AG04449 (cell line): ENCODE measurements at regions of chr20 and their contacts with region 1.

Region 1: GRCh38 chr20:47272893-47273590 is 83.5 kb downstream of the ZMYND8 start:
- DNase-seq: no peak
- H3K4me3 ChIP-seq: no peak overlapping the region
- CTCF ChIP-seq: peak; percentile 78

Region 2: DNA sequence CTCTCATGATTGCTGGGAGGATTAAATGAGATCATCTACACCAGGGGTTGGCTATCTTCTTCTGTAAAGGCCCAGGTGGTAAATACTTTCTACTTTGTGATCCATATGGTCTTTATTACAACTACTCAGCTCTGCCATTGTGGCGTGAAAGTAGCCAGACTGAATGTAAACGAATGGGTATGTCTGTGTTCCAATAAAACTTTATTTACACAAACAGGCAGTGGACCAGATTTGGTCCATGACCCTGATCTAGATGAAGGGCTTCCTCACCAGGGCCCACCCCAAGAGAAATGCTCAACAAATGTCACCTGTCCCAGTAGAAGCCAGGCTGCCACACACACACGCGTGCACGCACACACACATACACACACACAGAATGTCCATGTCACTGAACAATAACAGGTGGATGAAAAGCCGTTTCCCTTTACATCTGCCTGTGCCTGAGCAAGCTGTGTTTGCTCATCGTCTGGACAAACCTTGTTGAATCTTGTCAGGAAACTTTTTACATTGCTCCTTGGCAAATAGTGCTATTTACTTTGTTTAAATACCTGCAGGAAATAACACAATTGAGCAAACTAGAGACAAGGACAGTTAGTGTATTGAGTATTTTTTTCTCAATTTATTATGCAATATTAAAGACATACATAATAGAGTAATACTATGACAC is 264.1 kb before region 1 on chr20:
- CTCF ChIA-PET with region 1: no interaction called
- POLR2A ChIA-PET with region 1: no interaction called
- DNase-seq: no peak
- H3K4me3 ChIP-seq: no peak overlapping the region
- CTCF ChIP-seq: no peak

Region 3: DNA sequence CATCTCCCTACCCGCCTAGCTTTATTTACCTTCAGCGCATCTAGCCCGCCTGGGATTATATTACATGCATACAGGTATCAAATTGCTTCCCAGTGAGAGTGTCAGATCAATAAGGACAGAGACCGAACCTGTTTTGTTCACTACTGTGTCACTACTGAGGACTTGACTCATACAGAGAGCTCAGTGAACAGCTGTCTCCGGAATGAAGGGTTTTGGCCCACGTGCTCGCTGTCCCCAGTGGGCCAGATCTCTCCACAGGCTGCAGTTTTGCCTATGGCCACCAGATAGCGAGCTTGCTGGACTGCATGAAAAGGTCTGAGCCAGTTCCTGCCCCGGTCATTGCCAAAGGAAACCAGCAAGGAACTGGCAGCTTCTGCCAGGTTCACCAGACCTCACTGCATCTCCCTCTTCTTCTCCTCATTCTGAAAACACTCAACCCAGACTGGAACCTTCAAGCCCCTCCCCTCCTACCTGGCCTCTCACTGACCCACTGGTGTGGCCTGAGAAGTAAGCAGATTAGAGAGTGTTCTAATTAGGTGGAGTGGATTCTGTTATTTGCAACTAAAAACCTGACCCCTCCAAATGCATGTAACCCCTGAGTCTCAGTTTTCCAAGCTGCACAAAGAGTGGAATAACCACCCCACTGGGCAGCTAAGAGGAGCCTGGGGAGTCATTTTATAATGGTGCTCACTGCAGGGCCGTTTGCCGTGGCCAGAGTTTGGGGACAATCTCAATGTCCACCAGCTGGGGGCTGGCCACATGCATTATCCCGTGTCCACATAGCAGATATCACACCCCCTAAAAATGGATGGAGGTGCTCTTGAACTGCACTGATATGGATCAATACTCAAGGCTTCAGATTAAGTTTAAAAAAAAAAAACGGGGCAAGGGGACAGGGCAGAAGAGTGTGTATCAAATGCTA is 67.2 kb before region 1 on chr20:
- CTCF ChIA-PET with region 1: interaction called, 30 read pairs
- POLR2A ChIA-PET with region 1: no interaction called
- DNase-seq: no peak
- H3K4me3 ChIP-seq: no peak overlapping the region
- CTCF ChIP-seq: peak; percentile 74

Region 4: DNA sequence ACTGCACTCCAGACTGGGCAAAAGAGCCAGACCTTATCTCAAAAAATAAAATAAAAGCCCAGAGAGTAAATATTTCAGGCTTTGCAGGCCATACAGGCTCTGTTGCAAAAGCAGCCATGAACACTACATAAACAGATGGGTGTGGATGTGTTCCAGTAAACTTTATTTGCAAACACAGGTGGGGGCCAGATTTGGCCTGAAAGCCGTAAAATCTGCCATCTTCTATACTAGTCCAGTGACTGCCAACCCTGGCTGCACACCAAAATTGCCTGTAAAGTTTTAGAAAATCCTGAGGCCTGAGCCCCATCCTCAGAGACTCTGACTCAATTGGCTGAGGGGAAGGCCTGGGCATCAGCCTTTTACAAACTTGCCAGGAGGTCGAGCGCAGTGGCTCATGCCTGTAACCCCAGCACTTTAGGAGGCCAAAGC is 20.1 kb before region 1 on chr20:
- CTCF ChIA-PET with region 1: interaction called, 31 read pairs
- POLR2A ChIA-PET with region 1: interaction called, 4 read pairs
- DNase-seq: no peak
- H3K4me3 ChIP-seq: no peak overlapping the region
- CTCF ChIP-seq: no peak

Region 5: GRCh38 chr20:47296950-47297349 is 23.9 kb after region 1 on chr20:
- CTCF ChIA-PET with region 1: interaction called, 10 read pairs
- POLR2A ChIA-PET with region 1: no interaction called
- DNase-seq: no peak
- H3K4me3 ChIP-seq: no peak overlapping the region
- CTCF ChIP-seq: no peak

Region 6: DNA sequence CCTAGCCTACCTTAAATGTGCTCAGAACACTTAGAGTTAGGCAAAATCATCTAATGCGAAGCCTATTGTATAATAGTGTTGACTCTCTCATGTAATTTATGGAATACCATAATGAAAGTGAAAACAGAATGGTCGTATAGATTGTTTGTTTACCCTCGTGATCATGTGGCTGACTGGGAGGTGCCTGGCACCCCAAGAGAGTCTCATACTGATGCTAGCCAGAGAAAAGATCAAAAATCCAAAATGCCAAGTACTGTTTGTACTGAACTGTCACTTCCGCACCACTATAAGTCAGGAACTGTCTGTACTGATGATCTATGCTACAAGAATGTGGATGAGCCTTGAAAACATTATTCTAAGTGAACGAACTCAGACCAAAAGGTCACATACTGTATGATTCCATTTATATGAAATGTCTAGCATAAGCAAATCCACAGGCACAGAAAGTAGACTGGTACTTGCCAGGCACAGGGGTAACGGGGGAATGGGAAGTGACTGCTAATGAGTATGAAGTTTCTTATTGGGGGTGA is 61.0 kb after region 1 on chr20:
- CTCF ChIA-PET with region 1: interaction called, 20 read pairs
- POLR2A ChIA-PET with region 1: no interaction called
- DNase-seq: peak; percentile 88
- H3K4me3 ChIP-seq: peak overlapping the region; percentile 39
- CTCF ChIP-seq: no peak

Region 7: GRCh38 chr20:47370850-47371676 is 98.0 kb after region 1 on chr20:
- CTCF ChIA-PET with region 1: interaction called, 11 read pairs
- POLR2A ChIA-PET with region 1: no interaction called
- DNase-seq: no peak
- H3K4me3 ChIP-seq: no peak overlapping the region
- CTCF ChIP-seq: no peak

Region 8: DNA sequence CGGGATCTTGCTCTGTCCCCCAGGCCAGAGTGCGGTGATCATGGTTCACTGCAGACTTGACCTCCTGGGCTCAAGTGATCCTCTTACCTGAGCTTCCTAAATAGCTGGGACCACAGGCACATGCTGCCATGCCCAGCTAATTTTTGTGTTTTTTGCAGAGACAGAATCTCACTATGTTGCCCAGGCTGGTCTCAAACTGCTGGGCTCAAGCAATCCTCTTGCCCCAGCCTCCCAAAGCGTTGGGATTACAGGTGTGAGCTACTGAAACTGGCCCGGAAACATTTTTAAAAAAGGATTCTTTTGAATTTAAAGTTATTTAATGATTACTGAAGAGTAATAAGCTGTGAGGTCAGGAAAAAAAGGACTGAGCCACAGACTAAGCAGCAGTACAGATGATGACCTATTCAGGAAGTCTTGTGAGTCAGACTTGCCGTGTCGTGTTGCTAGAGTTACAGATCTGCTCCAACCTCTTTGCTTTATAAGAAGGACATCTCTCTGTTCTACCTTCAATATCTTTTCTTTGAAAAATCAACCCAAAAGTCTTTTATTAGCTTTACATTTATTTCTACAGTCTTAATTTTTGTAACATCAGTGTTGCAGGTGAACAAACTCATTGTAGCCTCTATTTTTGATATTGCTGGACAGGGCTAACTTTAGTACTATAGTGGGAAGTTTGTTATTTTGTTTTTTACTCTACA is 337.4 kb after region 1 on chr20:
- CTCF ChIA-PET with region 1: interaction called, 16 read pairs
- POLR2A ChIA-PET with region 1: no interaction called
- DNase-seq: peak; percentile 50
- H3K4me3 ChIP-seq: no peak overlapping the region
- CTCF ChIP-seq: no peak